Tibial artery (tissue), 4 donors: ENCODE measurements at regions of chr3 and their contacts with region 1.

Region 1: DNA sequence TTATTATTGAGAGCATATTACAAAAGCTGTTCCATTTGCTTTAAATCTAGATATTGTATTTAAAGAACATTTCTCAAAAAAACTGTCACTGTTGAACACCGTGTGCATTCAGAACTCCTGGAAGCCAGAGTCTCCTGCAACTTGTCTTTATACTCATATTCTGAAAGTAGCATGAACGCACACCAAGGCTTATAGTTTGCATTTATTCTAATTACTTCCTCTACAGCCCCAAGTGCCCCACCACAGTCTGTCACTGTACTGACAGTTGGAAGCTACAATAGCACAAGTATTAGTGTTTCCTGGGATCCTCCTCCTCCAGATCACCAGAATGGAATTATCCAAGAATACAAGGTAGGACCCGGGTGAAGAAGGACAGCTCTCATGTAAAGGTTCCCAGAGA is 537.4 kb downstream of the ROBO2 start:
- DNase-seq: no peak
- H3K4me3 ChIP-seq: no peak overlapping the region
- H3K27ac ChIP-seq: no peak overlapping the region
- H3K4me1 ChIP-seq: no peaks in the 10 kb centered on the region
- H3K27me3 ChIP-seq: no peaks in the 10 kb centered on the region
- CTCF ChIP-seq: no peak

Region 2: DNA sequence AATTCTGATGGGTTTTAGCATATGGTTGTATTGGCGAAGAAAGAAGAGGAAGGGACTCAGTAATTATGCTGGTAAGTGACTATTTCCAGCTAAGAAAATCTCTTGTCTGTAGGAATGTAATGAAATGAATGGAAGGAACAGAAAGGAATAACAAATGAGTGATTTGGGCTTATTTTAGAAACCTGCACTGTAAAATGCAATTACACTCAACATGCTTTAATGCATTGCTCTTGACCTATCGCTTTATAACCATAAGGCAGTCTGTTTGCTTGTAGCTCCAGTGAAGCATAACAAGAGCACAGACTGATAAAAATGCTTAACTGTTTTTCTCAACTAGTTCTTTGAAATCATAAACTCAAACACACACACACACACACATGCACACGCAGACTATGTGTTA is 11.6 kb after region 1 on chr3:
- intact Hi-C with region 1: loop called (anchors 1 kb)
- DNase-seq: no peak
- H3K4me3 ChIP-seq: no peak overlapping the region
- H3K27ac ChIP-seq: no peak overlapping the region
- H3K4me1 ChIP-seq: no peaks in the 10 kb centered on the region
- H3K27me3 ChIP-seq: no peaks in the 10 kb centered on the region
- CTCF ChIP-seq: no peak